ENCODE measurements at regions of chr2 and their contacts with region 1.

Region 1: DNA sequence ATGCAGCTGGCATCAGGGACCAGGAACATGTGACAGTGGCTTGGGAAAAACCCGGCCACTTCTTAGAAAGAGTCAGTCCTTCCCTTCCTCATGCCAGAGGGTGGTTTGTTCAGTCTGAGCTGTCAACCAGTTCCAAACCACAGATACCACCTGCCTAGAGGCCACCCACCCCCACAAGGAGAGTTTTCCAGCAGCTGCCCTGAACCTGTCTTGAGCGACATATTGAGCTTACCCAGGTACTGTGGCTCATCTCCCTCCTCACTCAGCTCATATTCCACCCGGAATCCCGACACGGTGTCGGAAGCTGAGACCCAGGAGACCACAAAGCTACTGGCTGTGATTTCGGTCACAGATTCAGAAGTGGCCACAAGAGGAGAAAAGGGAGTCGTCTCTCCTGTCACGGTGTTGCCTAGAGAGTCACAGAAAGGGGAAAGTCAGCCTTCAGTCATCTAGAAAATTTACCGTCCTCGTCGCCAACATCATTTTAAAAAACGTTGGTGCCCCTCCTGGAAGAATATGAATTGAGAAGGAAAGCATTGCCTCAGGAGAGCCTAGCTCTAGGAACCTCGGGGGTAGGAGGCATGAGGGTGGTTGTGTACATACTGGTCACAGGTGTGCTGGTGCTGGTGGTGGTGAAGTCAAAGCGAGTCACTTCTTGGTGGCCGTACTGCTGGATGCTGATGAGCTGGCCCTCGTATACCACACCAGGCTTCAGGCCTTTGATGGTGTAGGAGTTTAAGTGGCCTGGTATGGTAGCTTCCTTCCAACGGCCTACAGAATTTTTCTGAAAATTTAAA is 26.3 kb downstream of the FN1 start:
- DNase-seq: no peak
- H3K4me3 ChIP-seq: no peak overlapping the region
- H3K27ac ChIP-seq: peak overlapping the region; percentile 14 to 73 (median 68)
- H3K4me1 ChIP-seq: peaks cover 0 to 26% (median 12%) of the 10 kb centered on the region in 4 donors
- H3K27me3 ChIP-seq: no peaks in the 10 kb centered on the region
- CTCF ChIP-seq: no peak
- EP300 ChIP-seq: no peak
- POLR2A ChIP-seq: no peak

Region 2: GRCh38 chr2:215214408-215214807 is 195.1 kb before region 1 on chr2:
- intact Hi-C with region 1: no loop called
- DNase-seq: no peak
- H3K4me3 ChIP-seq: no peak overlapping the region
- H3K27ac ChIP-seq: no peak overlapping the region
- H3K4me1 ChIP-seq: no peaks in the 10 kb centered on the region
- H3K27me3 ChIP-seq: no peaks in the 10 kb centered on the region
- CTCF ChIP-seq: no peak
- EP300 ChIP-seq: no peak
- POLR2A ChIP-seq: no peak

Region 3: DNA sequence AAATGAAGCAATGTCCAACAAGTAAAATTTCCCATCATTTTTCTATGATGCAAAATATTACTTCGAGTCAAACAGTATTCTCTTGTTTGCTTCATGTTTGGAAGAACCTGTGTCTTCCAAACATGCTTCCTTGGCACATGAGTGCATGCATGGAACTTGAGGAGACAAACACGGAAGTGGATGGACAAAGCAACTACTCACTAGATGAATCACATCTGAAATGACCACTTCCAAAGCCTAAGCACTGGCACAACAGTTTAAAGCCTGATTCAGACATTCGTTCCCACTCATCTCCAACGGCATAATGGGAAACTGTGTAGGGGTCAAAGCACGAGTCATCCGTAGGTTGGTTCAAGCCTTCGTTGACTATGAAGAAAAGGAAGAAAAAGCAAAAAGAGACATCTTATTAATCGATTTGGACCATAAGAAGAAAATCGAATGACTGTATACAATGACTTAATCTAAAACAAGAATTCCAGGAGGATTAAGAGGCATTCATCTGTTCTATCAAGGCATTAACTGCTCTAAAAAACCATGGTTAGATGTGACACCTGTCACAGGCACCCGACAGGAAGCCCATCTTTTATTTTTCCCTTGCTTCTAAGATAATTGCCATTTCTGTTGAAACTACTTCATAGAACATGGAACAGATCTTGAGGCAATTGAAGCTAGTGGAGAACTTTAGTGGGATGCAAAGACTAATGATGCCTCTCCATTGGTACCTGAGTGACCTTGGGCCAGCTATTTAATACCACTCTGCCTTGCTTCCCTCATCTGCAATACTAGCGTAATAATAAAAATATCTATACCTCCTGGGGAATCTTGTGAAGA is 41.7 kb before region 1 on chr2:
- intact Hi-C with region 1: loop called (anchors 5 kb)
- DNase-seq: no peak
- H3K4me3 ChIP-seq: no peak overlapping the region
- H3K27ac ChIP-seq: peak overlapping the region in 1 of 4 donors; percentile 14
- H3K4me1 ChIP-seq: no peaks in the 10 kb centered on the region
- H3K27me3 ChIP-seq: no peaks in the 10 kb centered on the region
- CTCF ChIP-seq: no peak
- EP300 ChIP-seq: no peak
- POLR2A ChIP-seq: no peak

Region 4: GRCh38 chr2:215870986-215871385 is 461.5 kb after region 1 on chr2:
- intact Hi-C with region 1: no loop called
- DNase-seq: no peak
- H3K4me3 ChIP-seq: no peak overlapping the region
- H3K27ac ChIP-seq: no peak overlapping the region
- H3K4me1 ChIP-seq: peaks cover 0 to 39% (median 26%) of the 10 kb centered on the region in 4 donors
- H3K27me3 ChIP-seq: no peaks in the 10 kb centered on the region
- CTCF ChIP-seq: peak in 1 of 4 experiments; percentile 11
- EP300 ChIP-seq: no peak
- POLR2A ChIP-seq: no peak